Activated naive CD4-positive, alpha-beta T cell treated with anti-CD3 and anti-CD28 coated beads for 36 hours (primary cell): ENCODE measurements at regions of chr3 and their contacts with region 1.

Region 1: GRCh38 chr3:37996785-37997301 is 6.3 kb downstream of the VILL start:
- DNase-seq: peak; percentile 94
- H3K4me3 Mint-ChIP-seq: no peak overlapping the region
- H3K27ac Mint-ChIP-seq: peak overlapping the region; percentile 93
- H3K4me1 Mint-ChIP-seq: peaks cover 48% of the 10 kb centered on the region
- H3K27me3 Mint-ChIP-seq: no peaks in the 10 kb centered on the region

Region 2: DNA sequence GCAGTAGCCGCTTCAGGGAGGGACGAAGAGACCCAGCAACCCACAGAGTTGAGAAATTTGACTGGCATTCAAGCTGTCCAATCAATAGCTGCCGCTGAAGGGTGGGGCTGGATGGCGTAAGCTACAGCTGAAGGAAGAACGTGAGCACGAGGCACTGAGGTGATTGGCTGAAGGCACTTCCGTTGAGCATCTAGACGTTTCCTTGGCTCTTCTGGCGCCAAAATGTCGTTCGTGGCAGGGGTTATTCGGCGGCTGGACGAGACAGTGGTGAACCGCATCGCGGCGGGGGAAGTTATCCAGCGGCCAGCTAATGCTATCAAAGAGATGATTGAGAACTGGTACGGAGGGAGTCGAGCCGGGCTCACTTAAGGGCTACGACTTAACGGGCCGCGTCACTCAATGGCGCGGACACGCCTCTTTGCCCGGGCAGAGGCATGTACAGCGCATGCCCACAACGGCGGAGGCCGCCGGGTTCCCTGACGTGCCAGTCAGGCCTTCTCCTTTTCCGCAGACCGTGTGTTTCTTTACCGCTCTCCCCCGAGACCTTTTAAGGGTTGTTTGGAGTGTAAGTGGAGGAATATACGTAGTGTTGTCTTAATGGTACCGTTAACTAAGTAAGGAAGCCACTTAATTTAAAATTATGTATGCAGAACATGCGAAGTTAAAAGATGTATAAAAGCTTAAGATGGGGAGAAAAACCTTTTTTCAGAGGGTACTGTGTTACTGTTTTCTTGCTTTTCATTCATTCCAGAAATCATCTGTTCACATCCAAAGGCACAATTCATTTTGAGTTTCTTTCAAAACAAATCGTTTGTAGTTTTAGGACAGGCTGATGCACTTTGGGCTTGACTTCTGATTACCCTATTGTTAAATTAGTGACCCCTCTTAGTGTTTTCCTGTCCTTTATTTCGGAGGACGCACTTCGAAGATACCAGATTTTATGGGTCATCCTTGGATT is 1003.2 kb before region 1 on chr3 and contains the start of gene MLH1:
- CTCF ChIA-PET with region 1: no interaction called
- intact Hi-C with region 1: loop called (anchors 2 kb)
- DNase-seq: peak; percentile 100
- H3K4me3 Mint-ChIP-seq: no peak within 1 kb of the TSS
- H3K27ac Mint-ChIP-seq: no peak within 1 kb of the TSS
- H3K4me1 Mint-ChIP-seq: peaks cover 45% of the 10 kb centered on the region
- H3K27me3 Mint-ChIP-seq: no peaks in the 10 kb centered on the region
- total RNA-seq, gene MLH1: 86.6 to 95.3 TPM

Region 3: GRCh38 chr3:37855363-37855970 is 141.4 kb before region 1 on chr3:
- CTCF ChIA-PET with region 1: interaction called, 18 read pairs
- intact Hi-C with region 1: loop called (anchors 1 kb)
- DNase-seq: peak; percentile 88
- H3K4me3 Mint-ChIP-seq: no peak overlapping the region
- H3K27ac Mint-ChIP-seq: no peak overlapping the region
- H3K4me1 Mint-ChIP-seq: peaks cover 6% of the 10 kb centered on the region
- H3K27me3 Mint-ChIP-seq: no peaks in the 10 kb centered on the region

Region 4: DNA sequence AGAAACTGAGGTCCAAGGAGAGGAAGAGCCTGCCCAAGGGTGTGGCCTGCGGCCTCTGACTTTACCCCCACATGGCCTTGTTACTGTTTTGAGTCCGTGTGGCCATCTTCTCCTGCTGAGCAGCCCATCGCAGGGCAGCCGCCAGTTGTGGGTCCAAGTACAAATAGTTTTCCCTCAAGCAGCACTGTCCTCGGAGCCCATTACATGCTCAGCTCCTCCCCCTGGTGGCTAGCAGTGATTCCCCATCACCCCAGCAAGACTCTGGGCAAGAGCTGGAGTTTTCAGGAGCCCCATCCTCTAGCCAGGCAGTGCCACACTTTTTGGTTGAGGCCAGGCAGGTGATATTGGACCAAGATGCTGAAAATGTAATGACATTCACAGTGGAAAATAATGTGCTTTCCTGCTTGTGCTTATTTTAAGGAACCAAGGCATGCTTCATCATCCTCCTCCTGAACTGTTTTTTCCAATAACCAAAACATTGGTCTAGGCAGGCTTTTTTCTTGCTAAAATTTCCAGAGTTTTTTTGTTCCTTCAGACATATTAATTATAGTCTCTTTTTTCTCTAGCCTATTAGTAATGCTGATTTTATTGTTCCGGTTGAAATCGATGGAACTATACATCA is 29.5 kb before region 1 on chr3:
- CTCF ChIA-PET with region 1: interaction called, 35 read pairs
- intact Hi-C with region 1: no loop called
- DNase-seq: peak; percentile 81
- H3K4me3 Mint-ChIP-seq: no peak overlapping the region
- H3K27ac Mint-ChIP-seq: no peak overlapping the region
- H3K4me1 Mint-ChIP-seq: peaks cover 4% of the 10 kb centered on the region
- H3K27me3 Mint-ChIP-seq: no peaks in the 10 kb centered on the region

Region 5: GRCh38 chr3:38039101-38039898 is 42.5 kb after region 1 on chr3 and contains the start of gene DLEC1:
- CTCF ChIA-PET with region 1: interaction called, 7 read pairs
- intact Hi-C with region 1: loop called (anchors 1 kb)
- DNase-seq: peak; percentile 88
- H3K4me3 Mint-ChIP-seq: peak within 1 kb of the TSS; percentile 66
- H3K27ac Mint-ChIP-seq: peak within 1 kb of the TSS; percentile 88
- H3K4me1 Mint-ChIP-seq: peaks cover 28% of the 10 kb centered on the region
- H3K27me3 Mint-ChIP-seq: peaks cover 4% of the 10 kb centered on the region
- total RNA-seq, gene DLEC1: 0.17 to 0.19 TPM

Region 6: GRCh38 chr3:38143511-38143910 is 146.7 kb after region 1 on chr3:
- CTCF ChIA-PET with region 1: no interaction called
- intact Hi-C with region 1: no loop called
- DNase-seq: no peak
- H3K4me3 Mint-ChIP-seq: no peak overlapping the region
- H3K27ac Mint-ChIP-seq: no peak overlapping the region
- H3K4me1 Mint-ChIP-seq: peaks cover 24% of the 10 kb centered on the region
- H3K27me3 Mint-ChIP-seq: no peaks in the 10 kb centered on the region

Region 7: GRCh38 chr3:38453075-38453912 is 456.5 kb after region 1 on chr3 and contains the start of gene ACVR2B:
- CTCF ChIA-PET with region 1: interaction called, 3 read pairs
- intact Hi-C with region 1: loop called (anchors 2 kb)
- DNase-seq: peak; percentile 74
- H3K4me3 Mint-ChIP-seq: peak within 1 kb of the TSS; percentile 96
- H3K27ac Mint-ChIP-seq: peak within 1 kb of the TSS; percentile 74
- H3K4me1 Mint-ChIP-seq: peaks cover 2% of the 10 kb centered on the region
- H3K27me3 Mint-ChIP-seq: no peaks in the 10 kb centered on the region
- total RNA-seq, gene ACVR2B: 6.5 to 6.9 TPM